GM12878 (cell line): ENCODE measurements at regions of chr19 and their contacts with region 1.

Region 1: DNA sequence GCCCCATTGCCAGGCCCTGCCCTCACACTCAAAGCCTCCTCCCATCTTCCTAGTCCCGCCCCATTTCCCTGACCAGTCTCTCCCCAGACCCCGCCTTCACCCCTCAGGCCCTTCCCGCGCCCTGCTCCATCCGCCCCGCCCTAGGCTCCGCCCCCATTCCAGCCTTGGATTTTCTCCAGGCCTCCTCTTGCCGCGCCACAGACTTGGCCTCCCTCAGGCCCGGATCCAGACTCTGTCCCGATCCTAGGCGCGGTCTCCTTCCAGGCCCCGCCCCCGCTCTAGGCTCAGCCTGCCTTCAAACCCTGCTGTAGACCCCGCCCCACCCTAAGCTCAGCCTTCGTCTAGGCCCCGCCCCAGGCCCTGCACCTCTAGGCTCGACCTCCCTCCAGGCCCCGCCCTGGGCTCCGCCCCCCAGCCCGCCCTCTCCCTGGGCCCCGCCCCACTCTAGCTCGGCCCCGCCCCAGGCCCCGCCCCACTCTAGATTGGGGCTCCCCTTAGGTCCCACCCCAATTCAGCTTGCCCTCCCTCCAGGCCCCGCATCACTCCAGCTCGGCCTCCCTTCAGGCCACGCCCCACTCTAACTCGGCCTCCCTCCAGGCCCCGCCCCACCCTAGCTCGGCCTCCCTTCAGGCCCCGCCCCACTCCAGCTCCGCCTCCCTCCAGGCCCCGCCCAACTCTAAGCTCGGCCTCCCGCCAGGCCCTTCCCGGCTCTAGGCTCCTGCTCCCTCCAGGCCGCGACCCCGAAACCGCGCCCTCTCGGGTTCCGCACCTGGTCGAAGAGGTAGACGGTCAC is 18.5 kb downstream of the LMTK3 start:
- DNase-seq: peak; percentile 48
- ATAC-seq: peak; percentile 85
- H3K4me3 ChIP-seq: peak overlapping the region; percentile 57; the same call in 1 of the 2 replicates
- H3K27ac ChIP-seq: no peak overlapping the region
- H3K4me1 ChIP-seq: peaks cover 20% of the 10 kb centered on the region
- H3K27me3 ChIP-seq: peaks cover 1 to 3% of the 10 kb centered on the region in 2 experiments; a peak in 2 of 4 replicates
- CTCF ChIP-seq: no peak
- EP300 ChIP-seq: no peak
- POLR2A ChIP-seq: peak; percentile 68
- RAD21 ChIP-seq: no peak

Region 2: GRCh38 chr19:48203732-48204628 is 289.1 kb before region 1 on chr19:
- CTCF ChIA-PET with region 1: no interaction called
- POLR2A ChIA-PET with region 1: no interaction called
- RAD21 ChIA-PET with region 1: no interaction called
- SMC1A ChIA-PET with region 1: no interaction called
- in situ Hi-C with region 1: no loop called
- intact Hi-C with region 1: no loop called
- DNase-seq: peak; percentile 91
- ATAC-seq: peak; percentile 100
- H3K4me3 ChIP-seq: peak overlapping the region; percentile 87
- H3K27ac ChIP-seq: peak overlapping the region; percentile 71
- H3K4me1 ChIP-seq: peaks cover 3% of the 10 kb centered on the region; the same call in 1 of the 2 replicates
- H3K27me3 ChIP-seq: no peaks in the 10 kb centered on the region
- CTCF ChIP-seq: no peak
- EP300 ChIP-seq: no peak
- POLR2A ChIP-seq: peak; percentile 92
- RAD21 ChIP-seq: no peak

Region 3: DNA sequence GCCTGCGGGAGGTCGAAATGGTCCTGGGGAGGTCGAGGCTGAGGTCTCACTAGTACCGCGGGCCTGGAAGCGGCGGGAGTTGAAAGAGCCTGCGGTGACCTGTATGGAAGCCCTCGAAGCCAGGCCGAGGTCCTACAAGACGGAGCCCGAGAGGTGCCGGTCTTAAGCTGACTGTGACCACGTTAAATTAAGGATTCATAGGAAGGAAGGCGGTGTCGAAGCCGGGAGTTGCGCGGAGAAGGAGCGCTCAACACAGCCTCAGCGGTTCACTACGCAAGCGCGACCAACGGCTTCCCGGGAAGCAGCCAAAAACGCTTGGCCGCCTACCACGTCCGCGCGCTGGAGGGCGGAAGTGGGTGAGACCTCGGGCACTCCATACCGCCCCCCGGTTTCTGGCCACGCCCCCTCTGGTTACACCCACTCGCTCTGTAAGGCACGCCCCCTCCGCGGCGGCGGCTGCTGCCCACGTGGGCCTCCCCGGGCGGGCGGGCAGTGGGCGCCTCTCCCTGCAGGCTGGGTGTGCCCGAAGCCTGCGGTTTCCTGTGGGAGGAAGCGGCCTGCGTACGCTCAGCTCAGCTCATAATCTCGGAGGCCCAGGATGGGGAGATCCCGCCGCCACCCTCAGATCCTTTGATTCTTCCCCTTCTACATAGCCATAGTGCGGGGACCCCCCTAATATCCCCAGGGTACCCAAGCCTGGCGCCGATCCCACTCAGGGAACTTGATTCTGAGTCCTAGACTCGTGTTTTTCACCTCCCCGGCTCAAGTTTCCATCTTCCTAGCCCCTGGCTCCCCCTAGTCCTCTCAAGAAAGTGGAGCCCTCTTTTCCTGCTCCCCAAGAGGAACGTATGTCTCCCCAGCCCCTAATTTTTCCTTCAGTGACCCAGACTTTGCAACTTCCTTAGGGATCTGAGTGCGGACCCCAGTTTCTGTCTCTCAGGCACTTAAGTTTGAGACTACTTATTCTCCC is 171.2 kb before region 1 on chr19:
- CTCF ChIA-PET with region 1: interaction called, 10 read pairs
- POLR2A ChIA-PET with region 1: interaction called, 4 read pairs
- RAD21 ChIA-PET with region 1: interaction called, 4 read pairs
- SMC1A ChIA-PET with region 1: interaction called, 3 read pairs
- in situ Hi-C with region 1: no loop called
- intact Hi-C with region 1: no loop called
- DNase-seq: peak; percentile 92
- ATAC-seq: peak; percentile 79
- H3K4me3 ChIP-seq: peak overlapping the region; percentile 73
- H3K27ac ChIP-seq: peak overlapping the region; percentile 96
- H3K4me1 ChIP-seq: peaks cover 31% of the 10 kb centered on the region
- H3K27me3 ChIP-seq: no peaks in the 10 kb centered on the region
- CTCF ChIP-seq: no peak
- EP300 ChIP-seq: peak; percentile 40 to 49; a peak in 2 of 4 replicates
- POLR2A ChIP-seq: peak; percentile 86
- RAD21 ChIP-seq: no peak

Region 4: GRCh38 chr19:48391107-48391986 is 101.8 kb before region 1 on chr19 and contains the start of gene KDELR1:
- CTCF ChIA-PET with region 1: interaction called, 10 read pairs
- POLR2A ChIA-PET with region 1: interaction called, 4 read pairs
- RAD21 ChIA-PET with region 1: interaction called, 3 read pairs
- SMC1A ChIA-PET with region 1: interaction called, 3 read pairs
- in situ Hi-C with region 1: no loop called
- intact Hi-C with region 1: no loop called
- DNase-seq: no peak
- ATAC-seq: peak; percentile 91
- H3K4me3 ChIP-seq: peak within 1 kb of the TSS; percentile 95
- H3K27ac ChIP-seq: peak within 1 kb of the TSS; percentile 75
- H3K4me1 ChIP-seq: peaks cover 5% of the 10 kb centered on the region; the same call in 1 of the 2 replicates
- H3K27me3 ChIP-seq: peaks cover 13 to 16% of the 10 kb centered on the region in 2 experiments
- CTCF ChIP-seq: peak; percentile 91 to 96 (median 95)
- EP300 ChIP-seq: no peak
- POLR2A ChIP-seq: peak; percentile 68; the same call in 1 of the 2 replicates
- RAD21 ChIP-seq: no peak
- polyA plus RNA-seq, gene KDELR1: 2.3 to 13.2 TPM

Region 5: GRCh38 chr19:48480558-48481500 is 12.3 kb before region 1 on chr19:
- CTCF ChIA-PET with region 1: interaction called, 27 read pairs
- POLR2A ChIA-PET with region 1: no interaction called
- RAD21 ChIA-PET with region 1: no interaction called
- SMC1A ChIA-PET with region 1: no interaction called
- in situ Hi-C with region 1: no loop called
- intact Hi-C with region 1: no loop called
- DNase-seq: no peak
- ATAC-seq: no peak; the same call in 2 of the 3 replicates
- H3K4me3 ChIP-seq: no peak overlapping the region
- H3K27ac ChIP-seq: no peak overlapping the region
- H3K4me1 ChIP-seq: no peaks in the 10 kb centered on the region
- H3K27me3 ChIP-seq: no peaks in the 10 kb centered on the region
- CTCF ChIP-seq: no peak
- EP300 ChIP-seq: no peak
- POLR2A ChIP-seq: peak; percentile 46; the same call in 1 of the 2 replicates
- RAD21 ChIP-seq: no peak

Region 6: GRCh38 chr19:48608798-48609263 is 115.7 kb after region 1 on chr19:
- CTCF ChIA-PET with region 1: interaction called, 18 read pairs
- POLR2A ChIA-PET with region 1: interaction called, 4 read pairs
- RAD21 ChIA-PET with region 1: interaction called, 7 read pairs
- SMC1A ChIA-PET with region 1: interaction called, 3 read pairs
- in situ Hi-C with region 1: no loop called
- intact Hi-C with region 1: no loop called
- DNase-seq: no peak
- ATAC-seq: peak; percentile 93
- H3K4me3 ChIP-seq: no peak overlapping the region
- H3K27ac ChIP-seq: no peak overlapping the region
- H3K4me1 ChIP-seq: no peaks in the 10 kb centered on the region
- H3K27me3 ChIP-seq: no peaks in the 10 kb centered on the region
- CTCF ChIP-seq: peak; percentile 74 to 84 (median 82); a peak in 5 of 6 replicates
- EP300 ChIP-seq: no peak
- POLR2A ChIP-seq: no peak
- RAD21 ChIP-seq: peak; percentile 74